Heart left ventricle (tissue), 16 donors: ENCODE measurements at regions of chr17 and their contacts with region 1.

Region 1: GRCh38 chr17:979538-980405 is at the start of gene NXN:
- DNase-seq: peak; percentile 87 to 96 (median 90)
- ATAC-seq: peak; percentile 78 to 98 (median 93)
- H3K4me3 ChIP-seq: peak within 1 kb of the TSS; percentile 70 to 91 (median 77)
- H3K27ac ChIP-seq: peak within 1 kb of the TSS; percentile 57 to 95 (median 82)
- H3K4me1 ChIP-seq: peaks cover 0 to 49% (median 25%) of the 10 kb centered on the region in 12 donors
- H3K27me3 ChIP-seq: peaks cover 0 to 21% (median 0%) of the 10 kb centered on the region in 9 donors
- CTCF ChIP-seq: peak in 6 of 12 donors; percentile 19 to 56 (median 40)
- POLR2A ChIP-seq: peak in 1 of 2 donors; percentile 56
- total RNA-seq, gene NXN: 8.9 to 20.3 (median 15.8) TPM

Region 2: DNA sequence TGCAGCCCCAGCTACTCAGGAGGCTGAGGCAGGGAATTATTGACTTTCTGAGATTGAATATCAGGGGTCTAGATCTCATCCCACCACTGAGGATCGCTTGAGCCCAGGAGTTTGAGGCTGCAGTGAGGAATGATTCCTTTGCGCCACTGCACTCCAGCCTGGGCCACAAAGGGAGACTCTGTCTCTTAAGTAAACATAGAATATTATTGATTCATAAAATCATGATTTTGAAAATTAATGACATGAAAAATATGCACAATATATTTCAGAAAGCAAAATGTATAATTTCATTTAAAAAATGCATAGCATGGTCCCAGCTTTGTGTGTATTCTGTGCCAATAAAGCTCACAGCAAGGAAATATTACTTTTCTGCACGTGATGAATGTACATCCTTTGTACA is 263.5 kb before region 1 on chr17:
- intact Hi-C with region 1: loop called in 2 of 10 experiments (anchors 2 to 10 kb)
- DNase-seq: no peak
- ATAC-seq: no peak
- H3K4me3 ChIP-seq: peak overlapping the region in 3 of 12 donors; percentile 81 to 94 (median 84)
- H3K27ac ChIP-seq: no peak overlapping the region
- H3K4me1 ChIP-seq: peaks cover 0 to 36% (median 22%) of the 10 kb centered on the region in 12 donors
- H3K27me3 ChIP-seq: no peaks in the 10 kb centered on the region
- CTCF ChIP-seq: no peak
- POLR2A ChIP-seq: no peak

Region 3: DNA sequence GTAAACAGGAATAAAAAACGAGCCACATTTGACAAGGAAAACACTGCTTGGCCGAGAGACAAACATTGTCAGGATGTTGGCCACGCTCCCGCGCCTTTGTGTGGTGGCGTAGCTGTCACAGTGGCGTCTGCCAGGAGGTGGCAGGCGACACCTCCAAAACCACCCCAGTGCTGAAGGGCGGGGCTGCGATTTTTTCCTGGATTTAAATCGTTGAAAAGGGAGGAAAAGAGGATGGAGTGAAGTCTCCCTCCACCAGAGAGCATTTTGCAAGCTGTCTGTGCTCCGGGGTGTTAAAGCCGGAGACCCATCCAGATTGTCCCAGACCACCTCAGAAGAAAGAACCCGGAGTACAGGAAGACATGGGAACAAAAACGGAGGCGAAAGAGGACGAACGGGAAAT is 184.9 kb before region 1 on chr17:
- intact Hi-C with region 1: loop called (anchors 1 to 2 kb)
- DNase-seq: peak; percentile 85 to 91 (median 88)
- ATAC-seq: peak; percentile 47 to 81 (median 63)
- H3K4me3 ChIP-seq: peak overlapping the region in 11 of 12 donors; percentile 14 to 55 (median 43)
- H3K27ac ChIP-seq: peak overlapping the region in 10 of 12 donors; percentile 4 to 74 (median 51)
- H3K4me1 ChIP-seq: peaks cover 0 to 30% (median 10%) of the 10 kb centered on the region in 12 donors
- H3K27me3 ChIP-seq: no peaks in the 10 kb centered on the region
- CTCF ChIP-seq: peak; percentile 73 to 97 (median 89)
- POLR2A ChIP-seq: no peak

Region 4: GRCh38 chr17:879549-880442 is 100.0 kb before region 1 on chr17:
- intact Hi-C with region 1: loop called in 9 of 10 experiments (anchors 1 to 10 kb)
- DNase-seq: peak; percentile 80 to 88 (median 85)
- ATAC-seq: peak; percentile 33 to 77 (median 66)
- H3K4me3 ChIP-seq: peak overlapping the region in 2 of 12 donors; percentile 2
- H3K27ac ChIP-seq: peak overlapping the region; percentile 61 to 90 (median 82)
- H3K4me1 ChIP-seq: peaks cover 8 to 61% (median 47%) of the 10 kb centered on the region in 12 donors
- H3K27me3 ChIP-seq: no peaks in the 10 kb centered on the region
- CTCF ChIP-seq: peak; percentile 35 to 75 (median 66)
- POLR2A ChIP-seq: peak in 1 of 2 donors; percentile 21

Region 5: GRCh38 chr17:915538-916201 is 64.1 kb before region 1 on chr17:
- intact Hi-C with region 1: loop called in 5 of 10 experiments (anchors 2 to 10 kb)
- DNase-seq: peak in 4 of 5 donors; percentile 61 to 76 (median 66)
- ATAC-seq: peak; percentile 54 to 83 (median 68)
- H3K4me3 ChIP-seq: peak overlapping the region in 4 of 12 donors; percentile 1 to 34 (median 14)
- H3K27ac ChIP-seq: peak overlapping the region; percentile 46 to 90 (median 78)
- H3K4me1 ChIP-seq: peaks cover 0 to 32% (median 19%) of the 10 kb centered on the region in 12 donors
- H3K27me3 ChIP-seq: no peaks in the 10 kb centered on the region
- CTCF ChIP-seq: no peak
- POLR2A ChIP-seq: no peak

Region 6: DNA sequence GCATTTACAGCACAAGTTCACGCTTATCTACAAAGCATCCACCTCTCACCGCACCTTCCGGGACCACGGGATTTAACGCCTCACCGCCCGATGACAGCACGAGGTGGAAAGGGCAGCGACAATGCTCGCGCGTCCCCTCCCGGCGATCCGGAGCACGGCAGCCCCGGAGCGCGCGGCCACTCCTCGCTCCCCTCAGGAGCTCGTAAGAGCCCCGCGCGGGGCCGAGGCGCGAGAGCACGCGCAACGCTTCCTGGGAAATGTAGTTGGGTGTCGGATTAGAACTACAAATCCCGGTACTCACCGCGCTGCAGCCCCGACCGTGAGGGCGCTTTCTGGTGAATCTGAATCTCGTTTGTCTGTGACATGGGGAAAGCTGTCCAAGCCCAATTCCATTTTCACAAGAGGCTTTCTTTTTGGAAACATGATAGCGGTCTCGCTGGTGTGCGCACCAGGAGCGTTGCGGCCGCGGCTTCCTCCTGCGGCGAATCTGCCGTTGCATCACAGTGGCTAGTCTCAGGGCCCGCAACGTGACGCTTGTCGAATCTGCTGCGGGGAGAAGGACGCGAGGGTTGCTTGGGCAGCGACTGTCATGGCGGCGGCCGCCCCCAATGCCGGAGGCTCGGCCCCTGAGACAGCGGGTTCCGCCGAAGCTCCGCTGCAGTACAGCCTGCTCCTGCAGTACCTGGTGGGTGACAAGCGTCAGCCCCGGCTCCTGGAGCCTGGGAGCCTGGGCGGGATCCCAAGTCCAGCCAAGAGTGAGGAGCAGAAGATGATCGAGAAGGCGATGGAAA is 17.0 kb after region 1 on chr17 and contains the start of gene TIMM22:
- intact Hi-C with region 1: loop called in 1 of 10 experiments (anchors 2 kb)
- DNase-seq: peak; percentile 92 to 95 (median 95)
- ATAC-seq: peak; percentile 93 to 96 (median 95)
- H3K4me3 ChIP-seq: peak within 1 kb of the TSS; percentile 75 to 100 (median 86)
- H3K27ac ChIP-seq: peak within 1 kb of the TSS; percentile 78 to 99 (median 92)
- H3K4me1 ChIP-seq: peaks cover 6 to 48% (median 38%) of the 10 kb centered on the region in 12 donors
- H3K27me3 ChIP-seq: no peaks in the 10 kb centered on the region
- CTCF ChIP-seq: peak; percentile 84 to 98 (median 93)
- POLR2A ChIP-seq: peak; percentile 2 to 59
- total RNA-seq, gene TIMM22: 12.5 to 20.4 (median 16.5) TPM

Region 7: DNA sequence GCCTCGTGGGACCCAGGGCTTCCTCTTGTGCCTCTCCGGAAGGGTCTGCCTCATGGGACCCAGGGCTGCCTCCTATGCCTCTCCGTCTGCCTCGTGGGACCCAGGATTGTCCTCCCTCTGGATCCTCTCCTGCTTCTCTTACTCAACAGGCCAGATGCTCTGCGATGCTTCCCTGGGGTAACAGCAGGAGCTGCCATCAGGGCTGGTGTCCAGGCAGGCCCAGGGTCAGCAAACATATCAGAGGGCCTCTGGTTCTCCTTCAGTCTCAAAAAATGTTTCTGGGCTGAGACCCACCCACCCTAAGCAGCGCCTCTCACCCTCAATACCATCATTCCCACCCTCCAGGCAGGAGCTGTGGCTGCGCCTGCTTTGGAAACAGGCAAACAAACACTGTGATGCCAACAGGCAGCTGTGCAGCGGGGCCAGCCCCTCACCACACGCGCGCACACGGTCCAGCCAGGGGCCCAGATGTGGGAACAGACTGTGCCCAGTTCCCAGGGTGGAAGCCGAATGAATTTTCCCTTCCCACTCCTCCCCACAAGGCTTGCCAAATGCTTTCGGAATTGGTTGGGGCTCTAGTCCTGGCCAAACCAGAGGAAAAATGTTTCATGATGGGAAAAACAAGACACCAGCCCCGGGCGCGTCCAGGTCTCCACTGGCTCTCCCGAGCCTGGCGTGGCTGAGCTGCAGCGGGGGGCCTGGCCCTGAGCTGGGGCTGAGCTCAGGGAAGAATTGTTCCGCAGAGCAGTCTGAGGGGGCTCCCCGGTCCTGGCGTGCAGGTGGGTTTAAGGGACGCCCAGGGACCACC is 28.4 kb after region 1 on chr17:
- intact Hi-C with region 1: no loop called
- DNase-seq: peak in 4 of 5 donors; percentile 57 to 80 (median 67)
- ATAC-seq: peak; percentile 40 to 51 (median 46)
- H3K4me3 ChIP-seq: no peak overlapping the region
- H3K27ac ChIP-seq: peak overlapping the region; percentile 48 to 95 (median 70)
- H3K4me1 ChIP-seq: peaks cover 14 to 89% (median 57%) of the 10 kb centered on the region in 12 donors
- H3K27me3 ChIP-seq: no peaks in the 10 kb centered on the region
- CTCF ChIP-seq: no peak
- POLR2A ChIP-seq: no peak

Region 8: DNA sequence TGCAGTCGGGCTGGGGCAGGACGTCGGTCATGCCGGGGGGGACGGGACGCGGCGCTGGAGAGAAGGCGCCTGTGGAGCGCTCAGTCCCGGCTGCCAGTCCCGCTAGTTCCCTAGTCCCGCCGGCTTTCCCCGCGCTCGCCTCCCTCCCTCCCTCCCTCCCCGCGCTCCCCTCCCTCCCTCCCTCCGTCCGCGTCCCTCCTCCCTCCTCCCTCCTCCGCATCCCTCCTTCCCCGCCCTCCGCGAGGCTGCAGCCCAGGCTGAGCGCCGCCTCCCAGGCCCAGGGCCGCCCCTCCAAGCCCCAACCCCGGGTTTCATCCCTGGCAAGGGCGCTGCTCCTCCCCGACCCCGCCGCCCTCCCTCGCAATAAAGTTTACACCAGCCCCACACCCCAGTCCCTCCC is 51.9 kb after region 1 on chr17:
- intact Hi-C with region 1: no loop called
- DNase-seq: peak; percentile 83 to 85 (median 83)
- ATAC-seq: peak; percentile 37 to 71 (median 56)
- H3K4me3 ChIP-seq: peak overlapping the region; percentile 14 to 69 (median 56)
- H3K27ac ChIP-seq: peak overlapping the region in 10 of 12 donors; percentile 62 to 88 (median 76)
- H3K4me1 ChIP-seq: peaks cover 6 to 78% (median 46%) of the 10 kb centered on the region in 12 donors
- H3K27me3 ChIP-seq: no peaks in the 10 kb centered on the region
- CTCF ChIP-seq: no peak
- POLR2A ChIP-seq: no peak